ENCODE measurements at regions of chr7 and their contacts with region 1.

Region 1: GRCh38 chr7:29035044-29035740 is 77.1 kb upstream of the TRIL start:
- DNase-seq: peak; percentile 66
- H3K4me3 Mint-ChIP-seq: peak overlapping the region; percentile 25
- H3K27ac Mint-ChIP-seq: peak overlapping the region; percentile 78
- H3K4me1 Mint-ChIP-seq: peaks cover 21% of the 10 kb centered on the region
- H3K27me3 Mint-ChIP-seq: no peaks in the 10 kb centered on the region

Region 2: GRCh38 chr7:28976022-28976421 is 59.2 kb before region 1 on chr7:
- intact Hi-C with region 1: no loop called
- DNase-seq: no peak
- H3K4me3 Mint-ChIP-seq: no peak overlapping the region
- H3K27ac Mint-ChIP-seq: no peak overlapping the region
- H3K4me1 Mint-ChIP-seq: no peaks in the 10 kb centered on the region
- H3K27me3 Mint-ChIP-seq: no peaks in the 10 kb centered on the region

Region 3: GRCh38 chr7:29053105-29053872 is 18.1 kb after region 1 on chr7:
- intact Hi-C with region 1: loop called (anchors 1 kb)
- DNase-seq: no peak
- H3K4me3 Mint-ChIP-seq: no peak overlapping the region
- H3K27ac Mint-ChIP-seq: peak overlapping the region; percentile 1
- H3K4me1 Mint-ChIP-seq: no peaks in the 10 kb centered on the region
- H3K27me3 Mint-ChIP-seq: no peaks in the 10 kb centered on the region

Region 4: GRCh38 chr7:29084832-29085231 is 49.6 kb after region 1 on chr7:
- intact Hi-C with region 1: loop called (anchors 1 kb)
- DNase-seq: no peak
- H3K4me3 Mint-ChIP-seq: no peak overlapping the region
- H3K27ac Mint-ChIP-seq: no peak overlapping the region
- H3K4me1 Mint-ChIP-seq: peaks cover 4% of the 10 kb centered on the region
- H3K27me3 Mint-ChIP-seq: peaks cover 8% of the 10 kb centered on the region